ENCODE measurements at regions of chr13 and their contacts with region 1.

Region 1: DNA sequence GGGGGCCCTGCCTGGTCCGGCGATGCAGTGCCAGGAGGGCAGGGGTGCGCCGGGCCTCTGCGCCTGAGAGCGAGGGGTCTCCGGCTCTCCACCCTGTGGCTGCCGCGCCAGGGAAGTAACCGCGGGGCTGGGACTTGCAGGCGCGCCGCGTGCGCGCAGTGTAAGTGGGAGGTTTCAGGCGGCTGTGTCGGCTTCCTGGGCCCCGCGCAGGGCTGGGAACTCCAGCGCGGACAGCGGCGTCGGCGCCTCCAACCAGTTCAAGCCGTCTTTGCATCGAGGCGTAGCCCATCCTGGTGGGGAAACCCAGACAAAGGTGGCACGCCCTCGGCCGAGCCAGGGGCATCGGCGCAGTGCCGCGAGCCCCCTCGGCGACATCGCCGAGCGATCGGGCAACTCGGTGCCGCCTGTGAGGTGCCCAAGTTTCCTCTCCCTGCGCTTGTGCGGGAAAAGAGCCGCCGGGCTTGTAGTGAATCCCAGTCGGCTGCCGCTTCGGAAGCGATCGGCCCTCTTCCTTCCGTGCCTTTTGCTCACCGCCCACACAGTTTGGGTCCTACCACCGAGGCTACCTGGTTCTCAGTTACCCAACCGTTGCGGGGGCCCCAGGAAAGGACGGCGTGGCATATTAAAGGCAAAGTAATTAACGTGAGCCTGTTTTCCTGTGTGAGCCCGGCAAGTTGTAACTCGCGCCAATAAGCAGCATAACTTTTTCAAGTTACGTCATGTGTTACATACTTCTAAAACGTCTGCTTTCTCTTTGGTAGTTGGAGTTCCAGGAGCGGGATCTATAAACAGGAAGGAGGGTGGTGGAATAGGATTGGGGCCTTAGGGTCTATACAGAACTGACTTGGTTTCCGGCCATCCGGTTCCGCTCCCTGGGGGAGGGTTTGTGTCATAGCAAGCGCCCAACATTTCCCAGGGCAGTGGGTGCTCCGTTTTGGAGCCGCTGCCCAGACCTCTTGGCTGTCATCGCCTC is 1.2 kb downstream of the LRCH1 start:
- DNase-seq: peak; percentile 88
- ATAC-seq: peak; percentile 56
- H3K4me3 ChIP-seq: peak overlapping the region; percentile 87 to 97 (median 95)
- H3K4me3 Mint-ChIP-seq: peak overlapping the region; percentile 95
- H3K27ac ChIP-seq: peak overlapping the region; percentile 89 to 95
- H3K27ac Mint-ChIP-seq: peak overlapping the region; percentile 93
- H3K4me1 ChIP-seq: peaks cover 32 to 34% of the 10 kb centered on the region in 2 donors
- H3K4me1 Mint-ChIP-seq: peaks cover 55% of the 10 kb centered on the region
- H3K27me3 ChIP-seq: no peaks in the 10 kb centered on the region
- H3K27me3 Mint-ChIP-seq: no peaks in the 10 kb centered on the region
- CTCF ChIP-seq: peak; percentile 35

Region 2: DNA sequence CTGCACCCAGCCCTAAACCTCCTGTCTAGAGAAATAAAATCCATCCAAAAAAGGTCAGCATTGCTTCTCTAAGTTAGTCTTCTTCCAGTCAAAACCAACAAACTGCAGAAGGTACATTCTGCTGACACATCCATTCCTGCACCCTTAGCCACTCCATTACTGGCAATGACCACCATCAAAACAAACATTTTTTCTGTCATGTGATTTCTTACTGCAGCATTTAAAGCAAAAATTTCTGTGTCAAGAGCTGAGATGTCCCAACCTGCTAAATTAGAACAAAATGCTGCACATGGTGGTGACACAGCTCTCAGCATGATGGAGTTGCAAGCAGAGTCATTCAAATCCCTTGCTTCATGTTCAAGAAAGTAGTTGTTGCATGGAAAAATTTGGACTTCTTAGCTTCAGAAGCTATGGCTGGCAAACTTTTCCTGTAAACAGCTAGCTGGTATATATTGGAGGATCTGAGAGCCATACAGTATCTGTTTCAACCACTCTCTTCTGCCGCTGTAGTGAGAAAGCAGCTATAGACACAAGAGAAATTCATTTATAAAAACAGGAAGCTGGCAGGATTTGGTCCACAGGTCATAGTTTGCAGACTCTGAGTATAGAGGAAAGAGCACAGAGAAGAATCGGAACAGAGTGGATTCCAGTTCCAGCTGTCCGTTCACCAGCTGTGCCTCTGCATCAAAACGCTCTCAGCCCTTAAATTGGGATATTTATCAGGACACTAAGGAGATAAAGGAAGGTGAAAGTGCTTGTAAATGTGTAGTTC is 184.5 kb before region 1 on chr13:
- CTCF ChIA-PET with region 1: no interaction called
- POLR2A ChIA-PET with region 1: no interaction called
- intact Hi-C with region 1: loop called (anchors 5 kb)
- DNase-seq: peak; percentile 65
- ATAC-seq: peak; percentile 48
- H3K4me3 ChIP-seq: peak overlapping the region; percentile 13 to 56 (median 42)
- H3K4me3 Mint-ChIP-seq: peak overlapping the region; percentile 78
- H3K27ac ChIP-seq: peak overlapping the region; percentile 59 to 84
- H3K27ac Mint-ChIP-seq: peak overlapping the region; percentile 82
- H3K4me1 ChIP-seq: peaks cover 68 to 73% of the 10 kb centered on the region in 2 donors
- H3K4me1 Mint-ChIP-seq: peaks cover 81% of the 10 kb centered on the region
- H3K27me3 ChIP-seq: no peaks in the 10 kb centered on the region
- H3K27me3 Mint-ChIP-seq: no peaks in the 10 kb centered on the region
- CTCF ChIP-seq: no peak

Region 3: DNA sequence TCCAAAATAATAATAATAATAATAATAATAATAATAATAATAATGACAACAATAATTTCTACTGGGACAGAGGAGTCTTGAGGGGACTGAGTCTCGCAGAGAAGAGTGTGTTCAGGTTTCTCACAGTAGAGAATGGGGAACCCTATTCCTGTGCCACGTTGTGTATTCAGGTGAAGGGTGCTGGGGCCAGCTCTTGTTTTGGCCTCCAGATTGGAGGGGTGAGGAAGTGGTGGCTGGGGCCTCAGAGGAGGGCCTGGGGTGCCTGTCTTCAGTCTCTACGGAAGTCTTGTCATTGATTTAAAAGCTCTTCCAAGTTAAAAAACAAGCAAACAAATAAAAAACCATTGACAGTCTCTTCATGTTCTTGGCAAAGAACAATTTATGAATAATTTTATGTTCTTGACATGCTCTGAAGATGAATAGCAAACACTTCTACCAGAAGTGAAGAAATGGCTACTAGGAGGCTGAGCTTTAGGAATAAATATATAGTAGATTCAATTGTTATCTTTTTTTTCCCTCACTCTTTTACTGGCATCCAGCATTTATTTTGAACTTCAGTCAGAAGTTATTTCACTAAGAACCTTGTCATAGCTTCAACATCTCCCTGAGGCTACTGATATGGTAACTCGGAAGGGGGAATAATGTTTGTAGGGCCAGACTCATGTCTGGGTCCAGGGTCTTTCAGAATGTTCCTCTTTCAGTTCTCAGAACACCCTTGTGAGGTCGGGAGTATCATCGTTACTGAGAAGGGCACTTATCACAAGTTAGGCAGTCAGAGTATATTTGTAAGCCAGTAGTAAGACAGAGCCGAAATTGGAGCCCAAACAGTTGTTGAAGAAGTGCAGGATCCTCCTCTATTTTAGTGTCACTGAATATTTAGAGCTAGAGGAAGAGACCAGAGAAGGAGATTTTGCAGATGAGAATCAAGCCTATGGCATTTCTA is 11.9 kb after region 1 on chr13:
- CTCF ChIA-PET with region 1: interaction called, 30 read pairs
- POLR2A ChIA-PET with region 1: no interaction called
- intact Hi-C with region 1: no loop called
- DNase-seq: peak; percentile 27
- ATAC-seq: peak; percentile 51
- H3K4me3 ChIP-seq: no peak overlapping the region
- H3K4me3 Mint-ChIP-seq: peak overlapping the region; percentile 4
- H3K27ac ChIP-seq: peak overlapping the region in 1 of 2 donors; percentile 20
- H3K27ac Mint-ChIP-seq: peak overlapping the region; percentile 77
- H3K4me1 ChIP-seq: peaks cover 58 to 61% of the 10 kb centered on the region in 2 donors
- H3K4me1 Mint-ChIP-seq: peaks cover 57% of the 10 kb centered on the region
- H3K27me3 ChIP-seq: no peaks in the 10 kb centered on the region
- H3K27me3 Mint-ChIP-seq: no peaks in the 10 kb centered on the region
- CTCF ChIP-seq: no peak

Region 4: DNA sequence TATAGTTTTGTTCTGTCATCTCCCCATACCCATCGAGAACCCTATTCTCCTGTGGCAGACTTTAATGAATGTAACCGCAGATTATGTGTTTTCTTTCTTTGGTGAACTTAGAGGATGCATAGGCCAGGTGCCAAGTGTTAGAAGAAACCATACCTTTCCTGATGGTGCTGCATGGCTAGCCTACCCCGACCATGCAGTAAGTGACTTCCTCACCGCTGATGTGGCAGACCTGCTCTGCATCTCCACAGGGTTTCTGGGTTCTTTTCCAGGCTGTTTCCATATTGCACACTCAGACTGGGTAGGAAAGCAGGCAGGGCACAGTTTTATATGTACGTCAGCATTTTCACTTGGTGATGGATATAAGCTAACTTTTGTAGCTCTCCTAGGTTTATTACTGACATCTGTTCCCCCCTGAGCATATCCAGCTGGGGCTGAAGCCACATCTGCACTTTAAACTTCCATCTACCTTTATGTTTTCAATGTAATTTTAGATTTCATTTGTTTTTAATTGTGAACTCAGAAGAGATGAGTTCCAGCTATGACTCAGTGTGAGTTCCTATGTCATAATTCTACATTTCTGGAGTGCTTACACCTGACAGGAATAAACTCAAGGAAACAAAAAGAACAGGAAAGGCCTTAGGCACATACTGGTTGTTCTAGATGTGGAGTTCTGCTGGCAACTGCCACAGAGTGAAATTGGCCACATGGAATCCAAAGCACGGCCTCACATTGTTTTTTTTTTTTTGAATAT is 41.1 kb after region 1 on chr13:
- CTCF ChIA-PET with region 1: interaction called, 32 read pairs
- POLR2A ChIA-PET with region 1: interaction called, 5 read pairs
- intact Hi-C with region 1: loop called (anchors 2 kb)
- DNase-seq: peak; percentile 80
- ATAC-seq: peak; percentile 72
- H3K4me3 ChIP-seq: peak overlapping the region in 4 of 5 experiments; percentile 9 to 53 (median 28)
- H3K4me3 Mint-ChIP-seq: peak overlapping the region; percentile 59
- H3K27ac ChIP-seq: peak overlapping the region; percentile 67 to 69
- H3K27ac Mint-ChIP-seq: peak overlapping the region; percentile 73
- H3K4me1 ChIP-seq: peaks cover 96 to 97% of the 10 kb centered on the region in 2 donors
- H3K4me1 Mint-ChIP-seq: peaks cover 93% of the 10 kb centered on the region
- H3K27me3 ChIP-seq: no peaks in the 10 kb centered on the region
- H3K27me3 Mint-ChIP-seq: no peaks in the 10 kb centered on the region
- CTCF ChIP-seq: no peak

Region 5: DNA sequence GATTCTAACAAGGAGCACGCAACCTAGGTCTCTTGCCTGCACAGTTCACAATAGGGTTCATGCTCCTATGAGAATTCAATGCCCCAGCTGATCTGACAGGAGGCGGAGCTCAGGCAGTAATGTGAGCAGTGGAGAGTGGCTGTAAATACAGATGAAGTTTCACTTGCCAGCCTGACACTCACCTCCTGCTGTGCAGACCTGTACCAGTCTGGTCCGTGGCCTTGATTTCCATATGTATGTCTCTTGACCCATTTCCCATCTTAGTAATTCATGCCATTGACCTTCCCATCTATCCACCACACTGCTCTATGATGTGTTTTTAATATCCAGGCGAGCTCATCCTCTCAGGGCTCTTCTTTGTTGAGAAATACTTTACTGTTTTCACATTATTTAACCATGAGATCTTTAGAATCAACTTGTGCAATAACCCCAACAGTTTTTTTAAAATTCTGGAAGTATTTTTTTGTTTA is 94.0 kb after region 1 on chr13:
- CTCF ChIA-PET with region 1: interaction called, 13 read pairs
- POLR2A ChIA-PET with region 1: no interaction called
- intact Hi-C with region 1: no loop called
- DNase-seq: peak; percentile 56
- ATAC-seq: peak; percentile 83
- H3K4me3 ChIP-seq: no peak overlapping the region
- H3K4me3 Mint-ChIP-seq: peak overlapping the region; percentile 35
- H3K27ac ChIP-seq: no peak overlapping the region
- H3K27ac Mint-ChIP-seq: peak overlapping the region; percentile 51
- H3K4me1 ChIP-seq: peaks cover 20 to 36% of the 10 kb centered on the region in 2 donors
- H3K4me1 Mint-ChIP-seq: peaks cover 69% of the 10 kb centered on the region
- H3K27me3 ChIP-seq: no peaks in the 10 kb centered on the region
- H3K27me3 Mint-ChIP-seq: no peaks in the 10 kb centered on the region
- CTCF ChIP-seq: no peak

Region 6: GRCh38 chr13:46687810-46688209 is 133.6 kb after region 1 on chr13:
- CTCF ChIA-PET with region 1: interaction called, 120 read pairs
- POLR2A ChIA-PET with region 1: no interaction called
- intact Hi-C with region 1: no loop called
- DNase-seq: peak; percentile 35
- ATAC-seq: peak; percentile 49
- H3K4me3 ChIP-seq: no peak overlapping the region
- H3K4me3 Mint-ChIP-seq: no peak overlapping the region
- H3K27ac ChIP-seq: no peak overlapping the region
- H3K27ac Mint-ChIP-seq: no peak overlapping the region
- H3K4me1 ChIP-seq: peaks cover 0 to 2% of the 10 kb centered on the region in 2 donors
- H3K4me1 Mint-ChIP-seq: peaks cover 21% of the 10 kb centered on the region
- H3K27me3 ChIP-seq: no peaks in the 10 kb centered on the region
- H3K27me3 Mint-ChIP-seq: no peaks in the 10 kb centered on the region
- CTCF ChIP-seq: no peak

Region 7: GRCh38 chr13:46796515-46797474 is 242.6 kb after region 1 on chr13 and contains the start of gene ESD:
- CTCF ChIA-PET with region 1: interaction called, 6 read pairs
- POLR2A ChIA-PET with region 1: no interaction called
- intact Hi-C with region 1: loop called (anchors 5 kb)
- DNase-seq: peak; percentile 89
- ATAC-seq: peak; percentile 93
- H3K4me3 ChIP-seq: peak within 1 kb of the TSS; percentile 56 to 99 (median 77)
- H3K4me3 Mint-ChIP-seq: peak within 1 kb of the TSS; percentile 90
- H3K27ac ChIP-seq: peak within 1 kb of the TSS; percentile 78 to 89
- H3K27ac Mint-ChIP-seq: peak within 1 kb of the TSS; percentile 93
- H3K4me1 ChIP-seq: peaks cover 16 to 18% of the 10 kb centered on the region in 2 donors
- H3K4me1 Mint-ChIP-seq: peaks cover 30% of the 10 kb centered on the region
- H3K27me3 ChIP-seq: no peaks in the 10 kb centered on the region
- H3K27me3 Mint-ChIP-seq: no peaks in the 10 kb centered on the region
- CTCF ChIP-seq: no peak
- total RNA-seq, gene ESD: 52.9 and 53.4 TPM in 2 replicates

Measured in B cell (primary cell).